Mammary epithelial cell (primary cell): ENCODE measurements at regions of chrX and their contacts with region 1.

Region 1: DNA sequence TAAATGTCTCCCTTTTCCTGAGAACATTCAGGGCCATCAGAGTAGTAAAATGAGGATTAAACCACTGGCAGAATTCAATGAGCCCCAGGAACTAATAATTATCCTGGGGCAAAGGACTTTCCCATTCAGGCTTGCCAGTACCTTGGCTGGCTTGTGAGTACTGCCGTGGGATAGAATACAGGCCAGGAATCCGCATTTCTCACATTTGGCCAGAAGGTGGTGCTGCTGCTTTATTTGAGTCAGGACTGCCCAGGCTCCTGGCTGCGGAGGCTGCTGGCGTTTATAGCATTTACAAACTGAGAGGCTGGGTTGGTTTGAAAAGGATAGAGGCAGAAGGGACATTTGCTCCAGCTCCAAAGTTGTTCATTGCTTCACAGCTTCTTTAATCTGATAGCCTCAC is 91.4 kb downstream of the RTL9 start:
- DNase-seq: peak; percentile 60
- H3K4me3 ChIP-seq: no peak overlapping the region
- H3K27ac ChIP-seq: no peak overlapping the region
- H3K4me1 ChIP-seq: peaks cover 1% of the 10 kb centered on the region
- H3K27me3 ChIP-seq: peaks cover 2% of the 10 kb centered on the region
- CTCF ChIP-seq: peak; percentile 78 to 82

Region 2: GRCh38 chrX:109880629-109881028 is 569.4 kb before region 1 on chrX:
- CTCF ChIA-PET with region 1: no interaction called
- dilution Hi-C with region 1: no loop called
- in situ Hi-C with region 1: no loop called
- intact Hi-C with region 1: no loop called
- DNase-seq: no peak
- H3K4me3 ChIP-seq: no peak overlapping the region
- H3K27ac ChIP-seq: no peak overlapping the region
- H3K4me1 ChIP-seq: no peaks in the 10 kb centered on the region
- H3K27me3 ChIP-seq: peaks cover 6% of the 10 kb centered on the region
- CTCF ChIP-seq: no peak

Region 3: GRCh38 chrX:110491846-110492620 is 42.0 kb after region 1 on chrX:
- CTCF ChIA-PET with region 1: no interaction called
- dilution Hi-C with region 1: no loop called
- in situ Hi-C with region 1: no loop called
- intact Hi-C with region 1: no loop called
- DNase-seq: no peak
- H3K4me3 ChIP-seq: no peak overlapping the region
- H3K27ac ChIP-seq: no peak overlapping the region
- H3K4me1 ChIP-seq: no peaks in the 10 kb centered on the region
- H3K27me3 ChIP-seq: peaks cover 5% of the 10 kb centered on the region
- CTCF ChIP-seq: no peak

Region 4: GRCh38 chrX:110665223-110666002 is 215.4 kb after region 1 on chrX:
- CTCF ChIA-PET with region 1: no interaction called
- dilution Hi-C with region 1: no loop called
- in situ Hi-C with region 1: no loop called
- intact Hi-C with region 1: loop called (anchors 1 kb)
- DNase-seq: peak; percentile 9
- H3K4me3 ChIP-seq: no peak overlapping the region
- H3K27ac ChIP-seq: no peak overlapping the region
- H3K4me1 ChIP-seq: no peaks in the 10 kb centered on the region
- H3K27me3 ChIP-seq: no peaks in the 10 kb centered on the region
- CTCF ChIP-seq: peak; percentile 66 to 69

Region 5: DNA sequence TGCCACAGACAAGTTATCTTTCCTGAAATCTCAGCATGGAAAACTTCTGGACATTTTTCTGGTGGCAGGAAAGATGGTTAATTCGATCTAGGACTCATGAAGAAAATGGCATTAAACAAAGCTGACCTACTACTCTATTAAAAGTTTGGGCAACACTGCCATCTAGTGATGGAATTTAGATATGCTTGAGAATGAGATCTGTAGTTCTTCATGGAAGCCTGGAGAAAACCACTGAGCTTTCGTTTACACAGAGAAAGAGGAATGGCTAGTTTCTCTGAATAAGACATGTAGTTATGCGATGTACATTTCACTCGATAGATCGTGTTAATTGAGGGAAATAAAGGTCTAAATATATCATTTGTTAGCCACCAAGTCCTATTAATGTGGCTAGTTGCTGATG is 397.3 kb after region 1 on chrX:
- CTCF ChIA-PET with region 1: no interaction called
- dilution Hi-C with region 1: loop called (anchors 5 kb)
- in situ Hi-C with region 1: loop called in 1 of 2 experiments (anchors 10 kb)
- intact Hi-C with region 1: loop called (anchors 1 kb)
- DNase-seq: peak; percentile 44
- H3K4me3 ChIP-seq: no peak overlapping the region
- H3K27ac ChIP-seq: no peak overlapping the region
- H3K4me1 ChIP-seq: no peaks in the 10 kb centered on the region
- H3K27me3 ChIP-seq: no peaks in the 10 kb centered on the region
- CTCF ChIP-seq: peak; percentile 58 to 60

Region 6: GRCh38 chrX:110992611-110993010 is 542.6 kb after region 1 on chrX:
- CTCF ChIA-PET with region 1: no interaction called
- dilution Hi-C with region 1: no loop called
- in situ Hi-C with region 1: no loop called
- intact Hi-C with region 1: loop called (anchors 5 kb)
- DNase-seq: peak; percentile 20
- H3K4me3 ChIP-seq: no peak overlapping the region
- H3K27ac ChIP-seq: no peak overlapping the region
- H3K4me1 ChIP-seq: no peaks in the 10 kb centered on the region
- H3K27me3 ChIP-seq: no peaks in the 10 kb centered on the region
- CTCF ChIP-seq: peak; percentile 59 to 72

Region 7: DNA sequence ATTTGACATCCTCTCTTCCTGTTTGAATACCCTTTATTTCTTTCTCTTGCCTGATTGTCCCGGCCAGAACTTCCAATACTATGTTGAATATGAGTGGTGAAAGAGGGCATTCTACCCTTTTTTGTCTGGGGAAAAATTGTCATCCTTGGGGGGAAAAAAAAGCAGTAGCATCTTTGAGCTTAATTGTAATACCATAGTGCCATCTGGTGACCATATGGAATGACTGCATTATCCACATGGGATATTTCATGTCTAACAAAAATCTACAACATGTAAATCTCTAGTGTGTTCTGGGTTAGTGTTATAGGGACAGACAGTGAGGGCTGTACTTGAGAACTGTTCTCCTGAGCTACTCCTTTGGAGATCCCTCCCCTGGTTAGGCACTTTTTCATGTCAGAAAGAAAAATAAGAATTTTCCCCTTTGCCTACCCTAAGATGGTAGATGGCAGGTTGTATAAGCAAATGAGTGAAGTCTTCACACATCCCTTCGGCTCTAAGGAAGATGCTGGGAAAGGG is 794.2 kb after region 1 on chrX:
- CTCF ChIA-PET with region 1: no interaction called
- dilution Hi-C with region 1: no loop called
- in situ Hi-C with region 1: loop called in 1 of 2 experiments (anchors 25 kb)
- intact Hi-C with region 1: loop called (anchors 5 kb)
- DNase-seq: peak; percentile 5
- H3K4me3 ChIP-seq: no peak overlapping the region
- H3K27ac ChIP-seq: no peak overlapping the region
- H3K4me1 ChIP-seq: no peaks in the 10 kb centered on the region
- H3K27me3 ChIP-seq: no peaks in the 10 kb centered on the region
- CTCF ChIP-seq: peak; percentile 62 to 63